CD4-positive, alpha-beta memory T cell (primary cell): ENCODE measurements at regions of chr5 and their contacts with region 1.

Region 1: GRCh38 chr5:58886315-58887207 is 303.7 kb downstream of the RAB3C start:
- DNase-seq: peak; percentile 53 to 69 (median 67)
- H3K4me3 ChIP-seq: no peak overlapping the region
- H3K4me3 Mint-ChIP-seq: peak overlapping the region in 5 of 8 donors; percentile 4 to 65 (median 47)
- H3K27ac ChIP-seq: no peak overlapping the region
- H3K27ac Mint-ChIP-seq: peak overlapping the region in 6 of 7 donors; percentile 10 to 81 (median 78)
- H3K4me1 ChIP-seq: peaks cover 19% of the 10 kb centered on the region
- H3K4me1 Mint-ChIP-seq: peaks cover 15 to 33% (median 24%) of the 10 kb centered on the region in 4 donors
- H3K27me3 ChIP-seq: no peaks in the 10 kb centered on the region
- H3K27me3 Mint-ChIP-seq: peaks cover 3 to 4% of the 10 kb centered on the region in 2 donors

Region 2: DNA sequence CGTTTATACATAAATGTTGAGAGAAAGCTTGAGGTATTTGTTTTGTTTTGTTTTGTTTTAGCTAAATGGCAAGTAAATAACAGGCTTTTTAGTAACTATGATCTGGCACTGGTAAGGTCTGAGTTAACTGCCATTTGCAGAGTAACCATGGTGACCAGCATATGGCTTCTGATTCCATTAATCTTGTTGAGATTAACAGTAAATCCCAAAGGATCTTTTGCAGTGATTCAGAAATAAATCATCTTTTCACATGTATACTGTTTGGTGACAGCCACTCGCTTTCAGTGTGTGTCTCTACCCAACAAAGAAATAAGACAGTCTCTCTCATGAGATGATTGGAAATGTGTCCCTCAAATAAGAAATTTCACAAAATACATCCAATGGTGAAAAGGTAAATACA is 68.1 kb before region 1 on chr5:
- CTCF ChIA-PET with region 1: no interaction called
- POLR2A ChIA-PET with region 1: no interaction called
- intact Hi-C with region 1: no loop called
- DNase-seq: no peak
- H3K4me3 ChIP-seq: no peak overlapping the region
- H3K4me3 Mint-ChIP-seq: no peak overlapping the region
- H3K27ac ChIP-seq: no peak overlapping the region
- H3K27ac Mint-ChIP-seq: no peak overlapping the region
- H3K4me1 ChIP-seq: no peaks in the 10 kb centered on the region
- H3K4me1 Mint-ChIP-seq: no peaks in the 10 kb centered on the region
- H3K27me3 ChIP-seq: no peaks in the 10 kb centered on the region
- H3K27me3 Mint-ChIP-seq: no peaks in the 10 kb centered on the region

Region 3: DNA sequence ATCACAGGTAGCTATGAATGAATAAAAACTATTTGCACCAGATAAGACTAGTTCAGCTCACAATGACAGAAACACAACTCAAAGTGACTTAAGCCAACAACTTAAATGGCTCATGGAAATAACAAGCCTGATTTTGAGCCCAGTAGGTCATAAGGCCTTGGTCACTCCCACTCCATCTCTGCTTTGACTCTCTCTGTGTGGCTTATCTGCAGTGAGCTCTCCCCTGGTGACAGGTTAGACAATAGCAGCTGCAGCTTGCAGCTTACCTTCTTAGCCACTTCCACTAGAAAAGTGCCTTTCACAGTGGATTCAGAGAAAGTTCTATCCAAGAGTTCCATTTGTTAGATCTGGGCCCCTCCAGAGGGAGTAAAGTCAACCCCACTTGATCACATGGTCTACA is 12.0 kb after region 1 on chr5:
- CTCF ChIA-PET with region 1: interaction called, 43 read pairs
- POLR2A ChIA-PET with region 1: no interaction called
- intact Hi-C with region 1: no loop called
- DNase-seq: no peak
- H3K4me3 ChIP-seq: no peak overlapping the region
- H3K4me3 Mint-ChIP-seq: no peak overlapping the region
- H3K27ac ChIP-seq: no peak overlapping the region
- H3K27ac Mint-ChIP-seq: no peak overlapping the region
- H3K4me1 ChIP-seq: no peaks in the 10 kb centered on the region
- H3K4me1 Mint-ChIP-seq: peaks cover 0 to 4% (median under 1%) of the 10 kb centered on the region in 4 donors
- H3K27me3 ChIP-seq: no peaks in the 10 kb centered on the region
- H3K27me3 Mint-ChIP-seq: peaks cover 2 to 3% of the 10 kb centered on the region in 2 donors

Region 4: GRCh38 chr5:58999804-59000595 is 113.4 kb after region 1 on chr5:
- CTCF ChIA-PET with region 1: interaction called, 17 read pairs
- POLR2A ChIA-PET with region 1: no interaction called
- intact Hi-C with region 1: no loop called
- DNase-seq: no peak
- H3K4me3 ChIP-seq: no peak overlapping the region
- H3K4me3 Mint-ChIP-seq: peak overlapping the region in 2 of 8 donors; percentile 20 to 48
- H3K27ac ChIP-seq: no peak overlapping the region
- H3K27ac Mint-ChIP-seq: peak overlapping the region in 2 of 7 donors; percentile 74 to 77
- H3K4me1 ChIP-seq: peaks cover 13% of the 10 kb centered on the region
- H3K4me1 Mint-ChIP-seq: peaks cover 30 to 68% (median 43%) of the 10 kb centered on the region in 4 donors
- H3K27me3 ChIP-seq: no peaks in the 10 kb centered on the region
- H3K27me3 Mint-ChIP-seq: no peaks in the 10 kb centered on the region

Region 5: GRCh38 chr5:59174248-59174844 is 287.8 kb after region 1 on chr5:
- CTCF ChIA-PET with region 1: interaction called, 131 read pairs
- POLR2A ChIA-PET with region 1: interaction called, 8 read pairs
- intact Hi-C with region 1: loop called (anchors 1 kb)
- DNase-seq: peak; percentile 51 to 67 (median 57)
- H3K4me3 ChIP-seq: no peak overlapping the region
- H3K4me3 Mint-ChIP-seq: no peak overlapping the region
- H3K27ac ChIP-seq: no peak overlapping the region
- H3K27ac Mint-ChIP-seq: peak overlapping the region in 2 of 7 donors; percentile 5 to 12
- H3K4me1 ChIP-seq: no peaks in the 10 kb centered on the region
- H3K4me1 Mint-ChIP-seq: peaks cover 0 to 4% (median under 1%) of the 10 kb centered on the region in 4 donors
- H3K27me3 ChIP-seq: no peaks in the 10 kb centered on the region
- H3K27me3 Mint-ChIP-seq: no peaks in the 10 kb centered on the region

Region 6: GRCh38 chr5:59380350-59380951 is 493.9 kb after region 1 on chr5:
- CTCF ChIA-PET with region 1: interaction called, 19 read pairs
- POLR2A ChIA-PET with region 1: no interaction called
- intact Hi-C with region 1: loop called (anchors 2 kb)
- DNase-seq: peak in 4 of 5 donors; percentile 27 to 41 (median 34)
- H3K4me3 ChIP-seq: no peak overlapping the region
- H3K4me3 Mint-ChIP-seq: no peak overlapping the region
- H3K27ac ChIP-seq: no peak overlapping the region
- H3K27ac Mint-ChIP-seq: no peak overlapping the region
- H3K4me1 ChIP-seq: no peaks in the 10 kb centered on the region
- H3K4me1 Mint-ChIP-seq: peaks cover 0 to 4% (median 3%) of the 10 kb centered on the region in 4 donors
- H3K27me3 ChIP-seq: no peaks in the 10 kb centered on the region
- H3K27me3 Mint-ChIP-seq: peaks cover 0 to 3% of the 10 kb centered on the region in 2 donors